ENCODE measurements at regions of chr2 and their contacts with region 1.

Region 1: DNA sequence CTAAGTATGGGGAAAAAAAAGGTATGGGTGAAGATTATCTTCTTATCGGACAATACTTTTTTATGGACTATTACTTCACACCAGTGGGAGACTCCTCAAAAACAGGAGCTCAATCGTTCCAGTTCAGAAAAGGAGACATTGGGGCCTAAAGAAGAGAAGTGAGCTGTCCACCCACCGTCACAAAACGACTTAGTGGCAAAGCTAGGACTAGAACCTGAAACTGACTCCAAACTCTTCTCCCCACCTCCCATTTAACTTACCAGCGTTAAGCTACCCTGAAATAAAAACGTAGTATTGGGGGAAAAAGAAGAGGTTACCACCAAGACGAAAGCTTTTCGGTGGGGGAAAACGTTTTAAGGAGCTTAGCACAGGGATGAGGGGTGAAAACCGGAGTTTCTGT is 503 bp downstream of the GTF3C3 start:
- DNase-seq: no peak
- ATAC-seq: peak; percentile 21
- H3K4me3 ChIP-seq: peak overlapping the region; percentile 82
- H3K27ac ChIP-seq: peak overlapping the region; percentile 76
- H3K4me1 ChIP-seq: no peaks in the 10 kb centered on the region; the same call in 1 of the 2 replicates
- H3K27me3 ChIP-seq: no peaks in the 10 kb centered on the region
- CTCF ChIP-seq: no peak
- EP300 ChIP-seq: no peak
- POLR2A ChIP-seq: no peak
- RAD21 ChIP-seq: no peak

Region 2: GRCh38 chr2:196809260-196809659 is 10.3 kb after region 1 on chr2 and contains the start of gene C2orf66:
- CTCF ChIA-PET with region 1: no interaction called
- POLR2A ChIA-PET with region 1: interaction called, 5 read pairs
- RAD21 ChIA-PET with region 1: no interaction called
- SMC1A ChIA-PET with region 1: interaction called, 22 read pairs
- in situ Hi-C with region 1: no loop called
- intact Hi-C with region 1: no loop called
- DNase-seq: no peak
- ATAC-seq: no peak
- H3K4me3 ChIP-seq: no peak within 1 kb of the TSS
- H3K27ac ChIP-seq: no peak within 1 kb of the TSS
- H3K4me1 ChIP-seq: no peaks in the 10 kb centered on the region
- H3K27me3 ChIP-seq: no peaks in the 10 kb centered on the region; a peak in 1 of 4 replicates
- CTCF ChIP-seq: no peak
- EP300 ChIP-seq: no peak
- POLR2A ChIP-seq: no peak
- RAD21 ChIP-seq: no peak
- polyA plus RNA-seq, gene C2orf66: not detected

Region 3: GRCh38 chr2:196926562-196927375 is 127.8 kb after region 1 on chr2 and contains the start of gene PGAP1:
- CTCF ChIA-PET with region 1: no interaction called
- POLR2A ChIA-PET with region 1: interaction called, 10 read pairs
- RAD21 ChIA-PET with region 1: interaction called, 12 read pairs
- SMC1A ChIA-PET with region 1: interaction called, 7 read pairs
- in situ Hi-C with region 1: no loop called
- intact Hi-C with region 1: loop called (anchors 5 kb)
- DNase-seq: peak; percentile 48
- ATAC-seq: peak; percentile 93
- H3K4me3 ChIP-seq: peak within 1 kb of the TSS; percentile 95
- H3K27ac ChIP-seq: peak within 1 kb of the TSS; percentile 77
- H3K4me1 ChIP-seq: peaks cover 4% of the 10 kb centered on the region; the same call in 1 of the 2 replicates
- H3K27me3 ChIP-seq: no peaks in the 10 kb centered on the region
- CTCF ChIP-seq: no peak
- EP300 ChIP-seq: no peak
- POLR2A ChIP-seq: peak; percentile 91
- RAD21 ChIP-seq: no peak
- polyA plus RNA-seq, gene PGAP1: 0.75 to 1.00 TPM